GM12878 (cell line): ENCODE measurements at regions of chr12 and their contacts with region 1.

Region 1: GRCh38 chr12:124774462-124775167 is 89.0 kb downstream of the SCARB1 start:
- DNase-seq: peak; percentile 100
- ATAC-seq: peak; percentile 79
- H3K4me3 ChIP-seq: peak overlapping the region; percentile 34; the same call in 1 of the 2 replicates
- H3K27ac ChIP-seq: peak overlapping the region; percentile 98
- H3K4me1 ChIP-seq: peaks cover 70% of the 10 kb centered on the region
- H3K27me3 ChIP-seq: no peaks in the 10 kb centered on the region
- CTCF ChIP-seq: 0 out of 6 replicates have a peak, but pooled peaks of 1 of the 3 experiments have one; percentile 2
- EP300 ChIP-seq: peak; percentile 91 to 94
- POLR2A ChIP-seq: peak; percentile 41; the same call in 1 of the 2 replicates
- RAD21 ChIP-seq: peak; percentile 22

Region 2: DNA sequence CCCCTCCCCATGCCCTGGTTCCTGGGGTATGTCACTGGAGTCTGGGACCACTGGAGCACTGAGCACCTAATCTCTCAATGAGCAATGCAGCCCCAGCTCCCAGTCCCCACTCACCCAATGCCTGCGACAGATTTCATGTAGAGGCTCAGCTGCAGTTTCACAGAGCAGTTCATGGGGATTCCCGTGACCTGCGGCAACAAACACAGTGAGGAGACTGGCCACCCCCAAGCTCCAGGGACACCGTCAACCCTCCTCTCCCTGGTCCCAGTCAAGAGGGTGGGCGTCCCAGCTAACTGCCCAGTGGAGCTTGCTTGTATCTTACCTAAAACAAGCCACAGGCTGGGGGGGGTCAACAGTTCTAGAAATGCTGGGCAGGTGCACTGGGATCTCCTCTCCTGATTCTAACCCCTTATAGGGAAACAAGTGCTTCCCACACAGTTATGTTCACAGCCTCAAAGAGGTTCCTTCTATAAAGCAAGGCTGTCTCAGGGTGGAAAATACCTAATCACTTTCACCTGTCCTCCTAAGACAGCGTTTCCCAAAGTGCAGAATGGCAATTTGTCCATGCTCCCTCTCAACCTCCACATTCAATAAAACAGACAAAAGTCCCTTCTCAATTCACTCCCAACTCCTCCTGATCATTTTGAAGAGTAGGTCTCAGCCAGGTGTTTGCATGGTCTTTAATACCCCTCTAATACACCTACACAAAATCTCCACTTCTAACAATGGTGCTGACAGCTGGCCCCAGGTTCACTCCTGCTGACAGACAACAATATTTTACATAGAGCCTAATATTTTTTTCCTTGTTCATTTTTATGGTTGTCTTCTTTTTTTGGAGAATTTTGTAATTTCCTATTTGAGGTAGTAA is 20.7 kb after region 1 on chr12:
- CTCF ChIA-PET with region 1: interaction called, 4 read pairs
- POLR2A ChIA-PET with region 1: no interaction called
- RAD21 ChIA-PET with region 1: no interaction called
- SMC1A ChIA-PET with region 1: interaction called, 14 read pairs
- in situ Hi-C with region 1: no loop called
- intact Hi-C with region 1: loop called (anchors 1 kb)
- DNase-seq: no peak
- ATAC-seq: peak; percentile 98
- H3K4me3 ChIP-seq: no peak overlapping the region
- H3K27ac ChIP-seq: peak overlapping the region; percentile 89
- H3K4me1 ChIP-seq: peaks cover 25% of the 10 kb centered on the region
- H3K27me3 ChIP-seq: no peaks in the 10 kb centered on the region
- CTCF ChIP-seq: no peak
- EP300 ChIP-seq: 0 out of 4 replicates have a peak, but pooled peaks of 1 of the 2 experiments have one; percentile 17
- POLR2A ChIP-seq: peak; percentile 59
- RAD21 ChIP-seq: no peak

Region 3: DNA sequence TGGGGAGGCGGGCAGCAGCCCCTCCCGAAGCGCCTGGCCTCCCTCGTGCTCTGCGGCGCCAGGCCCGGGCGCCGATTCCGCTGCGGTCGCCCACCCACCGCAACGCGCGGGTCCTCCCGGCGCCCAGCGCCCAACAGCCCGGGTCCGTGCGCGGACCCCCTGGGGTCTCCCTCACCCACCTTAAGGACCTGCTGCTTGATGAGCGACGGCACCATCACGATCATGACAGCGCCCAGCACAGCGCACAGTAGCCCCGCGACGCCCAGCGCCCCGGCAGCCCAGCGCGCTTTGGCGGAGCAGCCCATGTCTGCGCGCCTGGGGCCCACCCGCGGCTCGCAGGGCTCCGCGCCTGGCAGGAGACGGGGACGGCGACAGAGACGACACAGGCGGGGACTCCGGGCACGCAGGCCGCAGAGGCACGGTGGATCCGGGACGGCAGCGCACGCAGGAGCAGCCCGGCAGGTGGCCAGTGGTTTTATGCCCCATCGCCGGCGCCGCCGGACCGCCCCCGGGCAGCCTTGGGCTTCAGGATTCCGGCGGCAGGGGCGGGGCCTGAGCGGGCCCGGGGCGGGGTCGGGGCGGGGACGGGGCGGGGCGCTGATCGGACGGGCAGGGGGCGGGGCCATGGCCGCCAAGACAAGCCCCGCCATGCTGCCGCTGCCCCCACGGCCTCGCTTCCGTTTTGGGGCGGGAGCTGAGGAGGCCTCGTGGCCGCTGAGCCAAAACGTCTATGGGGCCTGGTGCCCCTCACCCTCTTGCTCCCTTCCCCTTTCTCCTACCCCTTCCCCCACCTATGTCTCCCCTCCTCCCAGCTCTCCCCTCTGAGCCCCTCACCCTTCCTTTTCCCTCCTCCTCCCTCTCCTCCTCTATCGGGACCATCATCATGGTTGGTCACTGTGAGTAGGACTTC is 89.1 kb after region 1 on chr12 and contains the start of gene SCARB1:
- CTCF ChIA-PET with region 1: no interaction called
- POLR2A ChIA-PET with region 1: interaction called, 20 read pairs
- RAD21 ChIA-PET with region 1: interaction called, 12 read pairs
- SMC1A ChIA-PET with region 1: interaction called, 11 read pairs
- in situ Hi-C with region 1: no loop called
- intact Hi-C with region 1: loop called (anchors 1 kb)
- DNase-seq: peak; percentile 26
- ATAC-seq: peak; percentile 84
- H3K4me3 ChIP-seq: peak within 1 kb of the TSS; percentile 97
- H3K27ac ChIP-seq: peak within 1 kb of the TSS; percentile 80
- H3K4me1 ChIP-seq: peaks cover 11% of the 10 kb centered on the region
- H3K27me3 ChIP-seq: no peaks in the 10 kb centered on the region
- CTCF ChIP-seq: no peak
- EP300 ChIP-seq: no peak
- POLR2A ChIP-seq: peak; percentile 98
- RAD21 ChIP-seq: no peak
- polyA plus RNA-seq, gene SCARB1: 0.34 to 3.3 TPM

Region 4: GRCh38 chr12:124917135-124917840 is 142.7 kb after region 1 on chr12:
- CTCF ChIA-PET with region 1: interaction called, 6 read pairs
- POLR2A ChIA-PET with region 1: interaction called, 5 read pairs
- RAD21 ChIA-PET with region 1: interaction called, 35 read pairs
- SMC1A ChIA-PET with region 1: interaction called, 27 read pairs
- in situ Hi-C with region 1: no loop called
- intact Hi-C with region 1: no loop called
- DNase-seq: peak; percentile 98
- ATAC-seq: peak; percentile 71
- H3K4me3 ChIP-seq: peak overlapping the region; percentile 97
- H3K27ac ChIP-seq: peak overlapping the region; percentile 100
- H3K4me1 ChIP-seq: peaks cover 35% of the 10 kb centered on the region
- H3K27me3 ChIP-seq: no peaks in the 10 kb centered on the region
- CTCF ChIP-seq: no peak
- EP300 ChIP-seq: peak; percentile 75 to 93
- POLR2A ChIP-seq: peak; percentile 76
- RAD21 ChIP-seq: no peak